Prostate gland (tissue), 2 donors: ENCODE measurements at regions of chr10 and their contacts with region 1.

Region 1: DNA sequence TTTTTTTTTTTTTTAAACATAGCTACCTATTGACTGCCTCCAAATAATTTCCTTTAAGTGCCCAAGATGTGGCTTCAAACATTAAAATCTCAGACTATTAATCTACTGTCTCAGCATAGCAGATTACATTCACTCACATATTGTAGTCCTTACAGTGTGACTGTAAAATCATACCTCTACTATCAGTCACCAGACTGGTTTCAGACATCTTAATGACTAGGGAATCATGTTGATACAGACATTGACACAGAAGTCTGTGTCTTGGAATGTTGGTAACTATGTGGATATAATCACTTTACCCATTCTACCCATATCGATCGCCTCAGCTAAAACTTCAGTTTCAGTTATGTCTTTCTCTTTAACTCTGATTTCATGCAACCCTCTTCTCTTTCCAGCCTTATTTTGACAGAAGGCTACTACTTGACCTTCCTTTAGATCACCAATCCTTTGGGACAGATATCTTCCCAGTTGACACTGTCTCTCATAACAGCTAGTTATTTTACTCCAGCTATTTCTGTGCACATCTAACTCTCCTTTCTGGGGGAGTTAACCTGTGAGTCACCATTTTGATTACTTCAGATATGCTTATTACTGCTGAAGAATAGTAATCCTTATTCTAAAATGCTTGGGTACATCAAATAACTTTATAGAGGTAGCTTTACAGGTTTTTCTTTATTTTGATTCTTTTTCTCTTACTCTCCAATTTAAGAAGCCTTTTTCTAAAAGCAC is 7.0 kb downstream of the TNKS2 start:
- DNase-seq: no peak
- H3K4me3 ChIP-seq: no peak overlapping the region
- H3K27ac ChIP-seq: no peak overlapping the region
- H3K4me1 ChIP-seq: peaks cover 6% of the 10 kb centered on the region
- H3K27me3 ChIP-seq: no peaks in the 10 kb centered on the region
- CTCF ChIP-seq: no peak
- POLR2A ChIP-seq: no peak

Region 2: DNA sequence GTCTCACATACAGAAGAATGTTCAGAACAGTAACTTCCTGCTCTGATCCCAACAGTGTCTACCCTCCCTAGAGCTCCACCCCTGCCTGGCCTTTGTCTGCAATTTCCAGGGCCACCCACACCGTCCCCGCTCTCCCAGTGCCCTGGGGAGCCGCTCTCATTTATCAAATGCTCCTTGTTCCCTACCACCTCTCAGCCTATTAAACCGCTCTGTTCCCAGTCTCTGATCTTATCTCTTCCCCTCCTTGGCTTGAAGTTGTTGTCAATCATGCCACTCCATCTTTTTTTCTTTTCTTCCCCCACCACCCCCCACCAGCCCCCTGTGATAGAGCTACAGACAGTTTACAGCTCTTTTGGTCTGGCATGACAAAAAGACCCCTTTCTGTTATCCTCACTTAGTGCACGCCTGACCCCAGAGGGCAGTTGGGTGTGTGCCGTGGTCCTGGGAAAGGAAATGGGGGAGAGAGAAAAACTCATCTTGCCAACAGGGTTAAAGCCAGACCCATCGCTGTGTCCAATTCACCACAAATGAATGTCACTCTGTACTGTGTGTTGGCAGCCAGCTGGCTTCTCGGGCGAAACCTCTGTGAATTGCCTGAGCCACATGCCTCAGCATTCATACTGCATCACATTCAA is 423.9 kb before region 1 on chr10:
- intact Hi-C with region 1: loop called (anchors 5 kb)
- DNase-seq: peak; percentile 61
- H3K4me3 ChIP-seq: no peak overlapping the region
- H3K27ac ChIP-seq: no peak overlapping the region
- H3K4me1 ChIP-seq: no peaks in the 10 kb centered on the region
- H3K27me3 ChIP-seq: peaks cover 2% of the 10 kb centered on the region
- CTCF ChIP-seq: no peak
- POLR2A ChIP-seq: no peak

Region 3: GRCh38 chr10:92052088-92052487 is 246.8 kb after region 1 on chr10:
- intact Hi-C with region 1: no loop called
- DNase-seq: peak; percentile 24
- H3K4me3 ChIP-seq: no peak overlapping the region
- H3K27ac ChIP-seq: no peak overlapping the region
- H3K4me1 ChIP-seq: no peaks in the 10 kb centered on the region
- H3K27me3 ChIP-seq: no peaks in the 10 kb centered on the region
- CTCF ChIP-seq: no peak
- POLR2A ChIP-seq: no peak